ENCODE measurements at regions of chr21 and their contacts with region 1.

Region 1: GRCh38 chr21:42892931-42893755 is at the start of gene NDUFV3:
- DNase-seq: peak; percentile 97 to 100 (median 98)
- H3K4me3 ChIP-seq: peak within 1 kb of the TSS; percentile 69 to 79
- H3K4me3 Mint-ChIP-seq: peak within 1 kb of the TSS; percentile 87 to 94 (median 91)
- H3K27ac ChIP-seq: peak within 1 kb of the TSS; percentile 95
- H3K27ac Mint-ChIP-seq: peak within 1 kb of the TSS; percentile 90 to 99 (median 97)
- H3K4me1 ChIP-seq: peaks cover 15% of the 10 kb centered on the region
- H3K4me1 Mint-ChIP-seq: peaks cover 9 to 26% (median 13%) of the 10 kb centered on the region in 4 donors
- H3K27me3 ChIP-seq: no peaks in the 10 kb centered on the region
- H3K27me3 Mint-ChIP-seq: no peaks in the 10 kb centered on the region
- total RNA-seq, gene NDUFV3: 28.1 to 33.2 TPM

Region 2: GRCh38 chr21:42614811-42615659 is 278.1 kb before region 1 on chr21:
- CTCF ChIA-PET with region 1: no interaction called
- POLR2A ChIA-PET with region 1: no interaction called
- intact Hi-C with region 1: no loop called
- DNase-seq: peak; percentile 58 to 78 (median 68)
- H3K4me3 ChIP-seq: peak overlapping the region in 1 of 2 donors; percentile 37
- H3K4me3 Mint-ChIP-seq: no peak overlapping the region
- H3K27ac ChIP-seq: peak overlapping the region; percentile 53
- H3K27ac Mint-ChIP-seq: no peak overlapping the region
- H3K4me1 ChIP-seq: peaks cover 35% of the 10 kb centered on the region
- H3K4me1 Mint-ChIP-seq: peaks cover 3 to 17% (median 7%) of the 10 kb centered on the region in 4 donors
- H3K27me3 ChIP-seq: no peaks in the 10 kb centered on the region
- H3K27me3 Mint-ChIP-seq: peaks cover 0 to 4% of the 10 kb centered on the region in 2 donors

Region 3: DNA sequence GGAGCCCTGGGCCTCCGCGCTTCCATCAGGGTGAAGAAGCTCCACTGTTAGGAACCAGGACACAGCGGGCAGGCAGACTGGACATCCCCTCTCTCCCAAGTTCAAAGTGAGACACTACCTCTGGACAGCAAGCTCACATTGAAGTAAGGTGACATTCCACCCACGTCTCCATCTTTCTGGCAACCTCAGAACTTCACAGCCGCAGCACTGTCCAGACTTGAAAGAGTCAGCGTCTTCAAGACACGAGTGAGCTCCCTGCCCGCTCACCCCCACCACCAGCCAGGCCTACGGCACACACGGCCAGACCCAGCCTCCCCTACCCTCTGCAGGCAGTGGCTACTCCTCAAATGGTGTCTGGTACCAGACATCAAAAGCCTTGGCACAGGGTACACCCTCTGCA is 24.9 kb before region 1 on chr21:
- CTCF ChIA-PET with region 1: no interaction called
- POLR2A ChIA-PET with region 1: interaction called, 10 read pairs
- intact Hi-C with region 1: no loop called
- DNase-seq: no peak
- H3K4me3 ChIP-seq: no peak overlapping the region
- H3K4me3 Mint-ChIP-seq: no peak overlapping the region
- H3K27ac ChIP-seq: no peak overlapping the region
- H3K27ac Mint-ChIP-seq: peak overlapping the region in 1 of 7 donors; percentile 24
- H3K4me1 ChIP-seq: no peaks in the 10 kb centered on the region
- H3K4me1 Mint-ChIP-seq: peaks cover 5 to 18% (median 12%) of the 10 kb centered on the region in 4 donors
- H3K27me3 ChIP-seq: no peaks in the 10 kb centered on the region
- H3K27me3 Mint-ChIP-seq: no peaks in the 10 kb centered on the region

Region 4: DNA sequence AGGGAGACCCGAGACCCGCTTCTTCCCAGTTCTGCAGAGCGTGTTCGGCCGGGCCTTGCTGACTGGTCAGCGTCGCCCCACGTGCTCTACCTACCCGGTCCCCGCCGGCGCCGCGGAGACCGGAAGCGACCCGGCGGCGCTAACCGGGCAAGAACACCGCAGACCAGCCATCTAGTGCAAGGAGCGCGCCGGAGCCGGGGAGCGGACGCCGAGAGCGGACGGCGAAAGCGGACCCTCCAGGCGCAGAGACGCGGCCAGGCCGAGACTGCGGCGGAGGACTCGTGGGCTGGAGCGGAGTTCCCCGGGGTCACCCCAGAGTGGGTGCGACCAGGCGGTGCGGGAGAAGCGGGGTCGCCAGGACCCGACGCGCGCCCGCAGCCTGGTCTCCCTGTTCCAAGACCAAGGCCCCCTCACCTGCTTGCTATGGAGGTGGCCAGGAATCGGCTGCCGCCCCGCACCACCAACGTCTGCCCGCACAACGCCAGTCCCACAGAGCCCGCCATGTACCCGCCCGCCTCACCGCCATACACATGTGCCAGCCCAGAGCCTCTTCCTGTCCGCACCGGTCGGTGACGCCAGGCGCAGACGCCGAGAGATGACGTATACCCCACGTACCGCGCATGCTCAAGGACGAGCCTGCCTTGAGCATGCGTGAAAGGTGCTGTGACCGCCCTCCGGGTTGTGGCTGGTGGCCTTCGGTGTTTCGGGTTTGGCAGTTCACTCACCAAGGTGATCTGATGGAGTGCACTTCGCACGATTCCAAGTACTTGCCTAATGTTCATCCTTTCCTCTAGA is 14.0 kb before region 1 on chr21 and contains the start of gene WDR4:
- CTCF ChIA-PET with region 1: interaction called, 3 read pairs
- POLR2A ChIA-PET with region 1: interaction called, 54 read pairs
- intact Hi-C with region 1: loop called (anchors 1 kb)
- DNase-seq: peak; percentile 98 to 99 (median 99)
- H3K4me3 ChIP-seq: peak within 1 kb of the TSS; percentile 79 to 98
- H3K4me3 Mint-ChIP-seq: peak within 1 kb of the TSS; percentile 96 to 98 (median 97)
- H3K27ac ChIP-seq: peak within 1 kb of the TSS; percentile 92
- H3K27ac Mint-ChIP-seq: peak within 1 kb of the TSS; percentile 98 to 100 (median 99)
- H3K4me1 ChIP-seq: peaks cover 23% of the 10 kb centered on the region
- H3K4me1 Mint-ChIP-seq: peaks cover 19 to 41% (median 24%) of the 10 kb centered on the region in 4 donors
- H3K27me3 ChIP-seq: no peaks in the 10 kb centered on the region
- H3K27me3 Mint-ChIP-seq: peaks cover 0 to 3% of the 10 kb centered on the region in 2 donors
- total RNA-seq, gene WDR4: 23.5 to 27.5 TPM

Region 5: DNA sequence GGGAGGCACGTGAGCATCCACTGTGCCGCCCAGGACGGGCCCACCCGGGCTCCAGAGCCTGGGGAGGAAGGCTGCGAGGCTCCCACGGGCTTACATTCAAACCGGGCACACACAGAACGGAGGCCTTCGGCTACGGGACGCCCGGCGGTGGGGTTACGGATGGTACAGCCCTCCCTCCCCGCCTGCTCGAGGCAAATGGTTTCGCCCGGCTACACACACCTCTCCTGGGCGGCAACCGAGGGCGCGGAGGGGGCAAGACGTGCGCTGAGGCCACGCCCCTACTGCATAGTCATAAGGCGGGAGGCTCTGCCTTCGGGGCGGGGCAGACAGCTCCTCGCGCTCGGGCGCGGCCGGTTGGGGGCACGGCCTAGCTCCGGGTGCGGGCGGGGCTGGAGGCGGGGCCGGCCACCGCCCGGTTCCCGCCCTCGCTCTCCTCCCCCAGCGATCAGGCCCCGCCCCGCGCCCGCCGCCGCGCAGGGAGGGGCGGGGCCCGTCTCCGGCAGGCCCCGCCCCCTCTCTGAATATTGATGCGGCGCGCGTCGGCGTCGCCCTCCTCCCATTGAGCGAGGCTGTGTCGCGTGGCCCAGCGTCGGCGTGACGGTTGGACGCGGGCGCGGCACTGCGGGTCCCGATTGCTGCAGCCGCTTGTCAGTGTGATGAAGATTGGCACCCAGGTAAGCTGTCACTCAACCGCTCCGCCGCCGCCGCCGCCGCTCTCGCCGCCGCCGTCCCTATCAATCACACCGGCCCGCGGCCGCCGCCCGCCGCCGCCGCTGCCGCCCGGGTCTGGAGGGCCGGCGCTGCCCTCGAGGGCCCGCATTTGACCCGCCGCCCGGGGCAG is 81.1 kb after region 1 on chr21 and contains the start of gene PKNOX1:
- CTCF ChIA-PET with region 1: no interaction called
- POLR2A ChIA-PET with region 1: interaction called, 35 read pairs
- intact Hi-C with region 1: loop called (anchors 1 kb)
- DNase-seq: peak; percentile 99 to 100 (median 99)
- H3K4me3 ChIP-seq: peak within 1 kb of the TSS; percentile 70 to 94
- H3K4me3 Mint-ChIP-seq: peak within 1 kb of the TSS; percentile 84 to 95 (median 90)
- H3K27ac ChIP-seq: peak within 1 kb of the TSS; percentile 91
- H3K27ac Mint-ChIP-seq: peak within 1 kb of the TSS; percentile 91 to 98 (median 93)
- H3K4me1 ChIP-seq: peaks cover 25% of the 10 kb centered on the region
- H3K4me1 Mint-ChIP-seq: peaks cover 16 to 42% (median 30%) of the 10 kb centered on the region in 4 donors
- H3K27me3 ChIP-seq: no peaks in the 10 kb centered on the region
- H3K27me3 Mint-ChIP-seq: no peaks in the 10 kb centered on the region
- total RNA-seq, gene PKNOX1: 21.5 to 24.8 TPM